Endothelial cell of umbilical vein (primary cell): ENCODE measurements at regions of chr9 and their contacts with region 1.

Region 1: GRCh38 chr9:72526901-72527800 is 5.7 kb downstream of the TMC1 start:
- DNase-seq: peak; percentile 97
- H3K4me3 ChIP-seq: no peak overlapping the region
- H3K27ac ChIP-seq: peak overlapping the region; percentile 97
- H3K4me1 ChIP-seq: peaks cover 34% of the 10 kb centered on the region
- H3K27me3 ChIP-seq: no peaks in the 10 kb centered on the region
- CTCF ChIP-seq: no peak
- POLR2A ChIP-seq: no peak

Region 2: GRCh38 chr9:72305102-72305546 is 222.0 kb before region 1 on chr9:
- CTCF ChIA-PET with region 1: no interaction called
- POLR2A ChIA-PET with region 1: no interaction called
- dilution Hi-C with region 1: no loop called
- intact Hi-C with region 1: loop called (anchors 1 kb)
- DNase-seq: peak; percentile 95
- H3K4me3 ChIP-seq: peak overlapping the region in 2 of 3 experiments; percentile 8 to 53
- H3K27ac ChIP-seq: peak overlapping the region; percentile 53
- H3K4me1 ChIP-seq: peaks cover 7% of the 10 kb centered on the region
- H3K27me3 ChIP-seq: no peaks in the 10 kb centered on the region
- CTCF ChIP-seq: no peak
- POLR2A ChIP-seq: peak; percentile 50

Region 3: DNA sequence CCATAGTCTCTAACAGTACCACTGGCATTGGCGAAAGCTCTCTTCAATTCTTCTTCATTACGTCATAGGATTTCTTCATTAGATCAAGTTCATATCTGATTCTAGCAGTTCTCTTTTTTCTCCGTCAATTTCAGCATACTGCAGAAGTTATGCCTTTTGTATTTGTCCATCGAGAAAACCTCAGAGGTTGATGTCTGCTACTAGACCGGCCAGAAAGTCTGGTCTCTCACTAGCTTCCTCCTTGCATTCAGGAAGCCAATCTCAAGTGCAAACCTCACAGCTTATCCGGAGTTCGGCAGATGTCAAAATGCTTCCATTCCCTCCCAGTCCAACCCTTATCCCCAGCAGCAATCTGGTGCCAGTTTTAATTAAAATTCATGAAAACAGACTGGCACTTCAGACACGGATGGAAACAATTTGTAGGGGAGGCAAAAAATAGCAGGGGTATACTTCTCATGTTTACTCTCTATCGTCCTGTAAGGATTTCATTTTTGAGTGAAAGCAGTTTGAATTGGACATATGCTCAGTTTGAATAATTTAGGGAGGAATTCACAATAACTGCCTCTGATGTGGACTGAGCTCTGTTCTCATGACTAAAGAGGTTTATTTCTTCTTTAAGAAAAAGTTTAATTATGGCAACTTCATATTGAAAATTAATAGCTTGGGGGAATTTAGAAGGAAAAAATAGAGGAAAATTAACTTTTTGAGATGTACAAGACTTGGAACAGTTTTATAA is 62.1 kb before region 1 on chr9:
- CTCF ChIA-PET with region 1: interaction called, 6 read pairs
- POLR2A ChIA-PET with region 1: no interaction called
- dilution Hi-C with region 1: no loop called
- intact Hi-C with region 1: loop called (anchors 1 kb)
- DNase-seq: peak; percentile 85
- H3K4me3 ChIP-seq: peak overlapping the region in 1 of 3 experiments; percentile 38
- H3K27ac ChIP-seq: peak overlapping the region; percentile 82
- H3K4me1 ChIP-seq: peaks cover 35% of the 10 kb centered on the region
- H3K27me3 ChIP-seq: no peaks in the 10 kb centered on the region
- CTCF ChIP-seq: no peak
- POLR2A ChIP-seq: no peak

Region 4: DNA sequence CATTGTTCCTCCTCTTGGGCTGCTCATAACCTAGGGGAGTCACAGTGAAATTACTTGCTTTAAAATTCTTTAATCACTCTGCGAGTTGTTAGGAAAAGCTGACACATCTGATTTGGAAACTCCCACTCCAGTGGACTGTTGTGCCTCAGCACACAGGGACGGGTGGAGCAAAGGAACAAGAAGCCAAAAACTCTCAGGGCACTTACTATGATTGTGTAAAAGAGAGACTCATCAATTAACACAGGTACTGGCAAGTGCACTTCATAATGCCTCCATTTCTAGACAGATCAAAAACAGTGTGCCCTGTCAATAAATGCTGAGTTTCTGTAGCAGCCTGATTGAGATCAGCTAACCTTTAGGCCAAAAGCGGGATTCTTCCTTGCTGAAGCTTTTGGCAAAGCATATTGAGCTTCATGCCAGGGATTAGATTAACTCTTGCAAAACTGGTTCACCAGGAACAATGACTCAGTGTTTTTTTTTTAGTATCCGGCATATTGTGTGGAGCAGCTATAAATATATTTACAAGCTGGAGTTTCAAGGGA is 50.1 kb after region 1 on chr9:
- CTCF ChIA-PET with region 1: interaction called, 5 read pairs
- POLR2A ChIA-PET with region 1: interaction called, 6 read pairs
- dilution Hi-C with region 1: no loop called
- intact Hi-C with region 1: loop called (anchors 1 kb)
- DNase-seq: peak; percentile 90
- H3K4me3 ChIP-seq: peak overlapping the region in 1 of 3 experiments; percentile 7
- H3K27ac ChIP-seq: peak overlapping the region; percentile 65
- H3K4me1 ChIP-seq: peaks cover 51% of the 10 kb centered on the region
- H3K27me3 ChIP-seq: no peaks in the 10 kb centered on the region
- CTCF ChIP-seq: no peak
- POLR2A ChIP-seq: no peak

Region 5: DNA sequence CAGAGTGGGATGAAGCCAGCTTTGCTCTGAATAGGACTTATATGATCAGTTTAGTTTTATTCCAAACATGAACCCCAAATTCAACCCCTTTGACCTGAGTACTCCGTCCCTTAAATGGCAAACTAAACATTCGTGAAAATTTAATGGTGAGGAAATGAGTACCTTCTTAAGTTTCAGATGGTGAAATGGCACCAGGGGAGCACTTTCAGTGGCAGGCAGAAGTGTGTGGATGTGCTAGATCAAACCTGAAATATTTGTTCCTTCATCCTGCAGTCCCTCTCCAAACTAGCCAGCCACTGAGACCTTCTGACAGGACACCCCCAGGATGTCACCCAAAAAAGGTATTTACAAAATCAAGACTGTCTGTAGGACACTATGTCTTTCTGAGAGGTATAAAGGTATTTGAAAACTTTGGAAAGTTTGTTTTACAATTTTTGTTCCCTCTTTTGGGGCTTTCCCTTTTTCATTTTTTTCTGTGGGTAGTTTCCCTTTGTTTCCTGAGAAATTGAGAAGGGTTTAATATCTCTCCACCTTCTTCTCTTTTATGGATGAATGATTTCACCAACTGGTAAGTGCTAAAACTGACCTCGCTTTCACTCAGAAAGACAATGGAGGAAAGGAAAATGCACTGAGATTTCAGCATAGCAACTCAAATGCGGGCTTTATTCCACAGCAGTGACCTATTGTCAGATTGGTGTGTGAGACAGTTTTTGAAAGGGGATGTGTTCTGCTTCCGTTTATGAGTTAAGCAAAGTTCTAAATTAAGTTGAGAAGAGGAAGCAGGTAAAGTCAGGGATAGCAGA is 121.4 kb after region 1 on chr9:
- CTCF ChIA-PET with region 1: no interaction called
- POLR2A ChIA-PET with region 1: no interaction called
- dilution Hi-C with region 1: no loop called
- intact Hi-C with region 1: no loop called
- DNase-seq: no peak
- H3K4me3 ChIP-seq: no peak overlapping the region
- H3K27ac ChIP-seq: no peak overlapping the region
- H3K4me1 ChIP-seq: no peaks in the 10 kb centered on the region
- H3K27me3 ChIP-seq: peaks cover 5 to 6% of the 10 kb centered on the region in 2 experiments
- CTCF ChIP-seq: no peak
- POLR2A ChIP-seq: no peak

Region 6: DNA sequence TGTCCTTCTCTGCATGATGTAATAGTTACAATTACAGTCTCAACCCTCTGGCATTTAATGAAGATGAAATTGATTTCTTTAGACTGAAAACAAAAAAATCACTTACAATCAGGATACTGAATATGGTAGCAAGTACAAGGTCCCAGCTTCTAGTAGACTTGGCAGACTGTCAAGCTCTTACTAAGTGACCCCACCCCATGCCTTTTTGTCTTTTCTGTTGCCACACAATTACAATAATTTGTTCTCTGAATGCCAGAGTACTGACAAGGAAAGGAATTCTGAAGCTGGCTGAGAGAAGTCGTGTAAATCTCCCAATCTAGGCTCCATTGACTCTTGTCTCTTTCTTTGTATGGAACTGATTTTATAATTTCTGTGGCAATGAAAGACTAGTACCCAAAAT is 148.4 kb after region 1 on chr9:
- CTCF ChIA-PET with region 1: no interaction called
- POLR2A ChIA-PET with region 1: no interaction called
- dilution Hi-C with region 1: no loop called
- intact Hi-C with region 1: no loop called
- DNase-seq: no peak
- H3K4me3 ChIP-seq: no peak overlapping the region
- H3K27ac ChIP-seq: no peak overlapping the region
- H3K4me1 ChIP-seq: no peaks in the 10 kb centered on the region
- H3K27me3 ChIP-seq: peaks cover 2 to 4% of the 10 kb centered on the region in 2 experiments
- CTCF ChIP-seq: no peak
- POLR2A ChIP-seq: no peak

Region 7: GRCh38 chr9:72734631-72735030 is 207.5 kb after region 1 on chr9:
- CTCF ChIA-PET with region 1: no interaction called
- POLR2A ChIA-PET with region 1: no interaction called
- dilution Hi-C with region 1: no loop called
- intact Hi-C with region 1: no loop called
- DNase-seq: no peak
- H3K4me3 ChIP-seq: no peak overlapping the region
- H3K27ac ChIP-seq: no peak overlapping the region
- H3K4me1 ChIP-seq: no peaks in the 10 kb centered on the region
- H3K27me3 ChIP-seq: peaks cover 0 to 2% of the 10 kb centered on the region in 2 experiments
- CTCF ChIP-seq: no peak
- POLR2A ChIP-seq: no peak

Region 8: GRCh38 chr9:72997387-72997995 is 470.3 kb after region 1 on chr9:
- CTCF ChIA-PET with region 1: no interaction called
- POLR2A ChIA-PET with region 1: no interaction called
- dilution Hi-C with region 1: no loop called
- intact Hi-C with region 1: loop called (anchors 5 kb)
- DNase-seq: peak; percentile 89
- H3K4me3 ChIP-seq: peak overlapping the region in 2 of 3 experiments; percentile 17 to 57
- H3K27ac ChIP-seq: peak overlapping the region; percentile 100
- H3K4me1 ChIP-seq: peaks cover 38% of the 10 kb centered on the region
- H3K27me3 ChIP-seq: no peaks in the 10 kb centered on the region
- CTCF ChIP-seq: no peak
- POLR2A ChIP-seq: peak; percentile 71